ENCODE measurements at regions of chr16 and their contacts with region 1.

Region 1: DNA sequence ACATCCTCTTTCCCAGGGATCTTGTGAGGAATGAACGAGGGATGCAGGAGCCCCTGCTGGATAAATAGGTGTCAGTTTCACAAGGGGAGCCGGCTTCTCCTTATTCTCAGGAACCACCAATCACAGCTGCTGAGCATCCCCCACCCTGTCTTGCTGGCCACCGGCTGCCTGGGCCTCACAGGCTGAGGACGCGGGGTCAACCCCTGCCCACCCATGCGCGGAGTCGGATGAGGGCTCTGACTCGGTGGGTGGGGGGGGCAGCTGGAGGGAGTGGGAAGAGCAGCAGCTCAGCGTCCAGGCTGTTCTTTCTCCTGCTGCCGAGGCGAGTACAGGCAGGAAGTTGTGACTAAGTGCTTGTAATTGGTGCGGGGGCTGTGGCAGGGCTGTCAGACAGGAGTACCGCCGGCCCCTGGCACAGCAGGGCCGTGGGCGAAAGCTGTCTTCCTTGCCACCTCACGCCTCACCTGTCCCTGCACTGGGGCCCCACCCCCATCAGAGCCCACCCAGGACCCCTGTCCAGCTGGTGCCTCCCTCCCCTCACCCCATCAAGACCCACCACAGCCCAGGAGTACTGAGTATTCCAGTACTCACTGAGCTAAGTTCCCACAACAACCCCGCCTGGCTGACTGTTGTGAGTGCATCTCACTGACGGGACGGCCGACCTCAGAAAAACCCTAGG is 11.0 kb upstream of the DPEP1 start:
- DNase-seq: peak; percentile 34 to 60 (median 43)
- ATAC-seq: peak; percentile 65
- H3K4me3 ChIP-seq: no peak overlapping the region
- H3K27ac ChIP-seq: no peak overlapping the region
- H3K4me1 ChIP-seq: peaks cover 3 to 52% of the 10 kb centered on the region in 2 experiments; a peak in 4 of 5 replicates
- H3K27me3 ChIP-seq: no peaks in the 10 kb centered on the region
- CTCF ChIP-seq: no peak
- EP300 ChIP-seq: no peak
- POLR2A ChIP-seq: no peak
- RAD21 ChIP-seq: no peak

Region 2: GRCh38 chr16:89502319-89502878 is 100.0 kb before region 1 on chr16:
- CTCF ChIA-PET with region 1: no interaction called
- POLR2A ChIA-PET with region 1: no interaction called
- in situ Hi-C with region 1: no loop called
- intact Hi-C with region 1: no loop called
- DNase-seq: peak in 2 of 4 experiments; percentile 34 to 36
- ATAC-seq: no peak
- H3K4me3 ChIP-seq: no peak overlapping the region
- H3K27ac ChIP-seq: peak overlapping the region; percentile 2; the same call in 2 of the 3 replicates
- H3K4me1 ChIP-seq: peaks cover 34 to 54% of the 10 kb centered on the region in 2 experiments; a peak in 4 of 5 replicates
- H3K27me3 ChIP-seq: no peaks in the 10 kb centered on the region; a peak in 1 of 5 replicates
- CTCF ChIP-seq: no peak
- EP300 ChIP-seq: no peak
- POLR2A ChIP-seq: no peak
- RAD21 ChIP-seq: no peak

Region 3: GRCh38 chr16:89641458-89642119 is 39.2 kb after region 1 on chr16:
- CTCF ChIA-PET with region 1: interaction called, 3 read pairs
- POLR2A ChIA-PET with region 1: interaction called, 4 read pairs
- in situ Hi-C with region 1: no loop called
- intact Hi-C with region 1: loop called (anchors 5 kb)
- DNase-seq: no peak
- ATAC-seq: no peak
- H3K4me3 ChIP-seq: no peak overlapping the region
- H3K27ac ChIP-seq: no peak overlapping the region
- H3K4me1 ChIP-seq: peaks cover 0 to 58% of the 10 kb centered on the region in 2 experiments; a peak in 3 of 5 replicates
- H3K27me3 ChIP-seq: no peaks in the 10 kb centered on the region; a peak in 1 of 5 replicates
- CTCF ChIP-seq: 0 out of 6 replicates have a peak, but pooled peaks of 1 of the 3 experiments have one; percentile 0
- EP300 ChIP-seq: no peak
- POLR2A ChIP-seq: no peak
- RAD21 ChIP-seq: no peak

Region 4: DNA sequence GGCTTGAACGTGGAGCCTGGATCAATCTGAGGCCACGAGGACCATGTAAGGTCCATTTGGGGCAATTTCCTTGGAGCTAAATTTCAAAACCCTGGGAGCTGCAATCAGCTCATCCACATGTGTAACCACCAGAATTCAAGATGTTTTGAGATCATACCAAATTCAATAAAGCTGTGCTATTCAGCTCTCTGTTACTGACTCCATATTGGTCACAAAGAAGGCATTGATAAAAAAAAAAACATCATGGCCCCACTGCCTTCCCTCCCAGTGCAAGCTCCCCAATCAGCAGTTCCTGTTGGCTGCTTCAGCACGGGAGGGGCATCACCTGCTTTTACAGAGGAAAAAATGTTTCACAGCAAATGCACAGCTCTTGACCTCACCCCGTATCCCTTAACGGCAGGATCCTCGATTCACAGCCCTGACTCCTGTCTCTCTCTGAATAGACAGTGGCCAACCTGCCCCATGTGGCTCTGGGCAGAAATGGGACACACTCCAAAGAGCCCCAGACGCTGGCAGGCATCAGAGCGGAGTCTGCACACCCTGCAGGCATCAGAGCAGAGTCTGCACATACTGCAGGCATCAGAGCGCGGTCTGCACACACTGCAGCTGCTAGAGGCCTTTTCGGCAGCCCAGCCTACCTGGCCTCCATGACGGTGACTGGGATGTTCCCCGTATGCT is 177.0 kb after region 1 on chr16:
- CTCF ChIA-PET with region 1: no interaction called
- POLR2A ChIA-PET with region 1: no interaction called
- in situ Hi-C with region 1: no loop called
- intact Hi-C with region 1: no loop called
- DNase-seq: no peak
- ATAC-seq: no peak
- H3K4me3 ChIP-seq: no peak overlapping the region
- H3K27ac ChIP-seq: no peak overlapping the region
- H3K4me1 ChIP-seq: no peaks in the 10 kb centered on the region
- H3K27me3 ChIP-seq: no peaks in the 10 kb centered on the region
- CTCF ChIP-seq: no peak
- EP300 ChIP-seq: no peak
- POLR2A ChIP-seq: no peak
- RAD21 ChIP-seq: no peak

Region 5: GRCh38 chr16:89845417-89845816 is 243.0 kb after region 1 on chr16:
- CTCF ChIA-PET with region 1: no interaction called
- POLR2A ChIA-PET with region 1: no interaction called
- in situ Hi-C with region 1: no loop called
- intact Hi-C with region 1: no loop called
- DNase-seq: no peak
- ATAC-seq: peak; percentile 25; the same call in 2 of the 3 replicates
- H3K4me3 ChIP-seq: no peak overlapping the region
- H3K27ac ChIP-seq: no peak overlapping the region
- H3K4me1 ChIP-seq: peaks cover 0 to 35% of the 10 kb centered on the region in 2 experiments; a peak in 3 of 5 replicates
- H3K27me3 ChIP-seq: no peaks in the 10 kb centered on the region
- CTCF ChIP-seq: no peak
- EP300 ChIP-seq: no peak
- POLR2A ChIP-seq: no peak
- RAD21 ChIP-seq: no peak

Measured in K562 (cell line).